ENCODE measurements at regions of chr20 and their contacts with region 1.

Region 1: GRCh38 chr20:2688041-2688591 is 4.5 kb upstream of the EBF4 start:
- DNase-seq: peak; percentile 78 to 84 (median 80)
- H3K4me3 ChIP-seq: no peak overlapping the region
- H3K4me3 Mint-ChIP-seq: peak overlapping the region in 6 of 8 donors; percentile 20 to 64 (median 43)
- H3K27ac ChIP-seq: no peak overlapping the region
- H3K27ac Mint-ChIP-seq: peak overlapping the region in 4 of 7 donors; percentile 65 to 77 (median 70)
- H3K4me1 ChIP-seq: peaks cover 16% of the 10 kb centered on the region
- H3K4me1 Mint-ChIP-seq: peaks cover 13 to 30% (median 27%) of the 10 kb centered on the region in 4 donors
- H3K27me3 ChIP-seq: no peaks in the 10 kb centered on the region
- H3K27me3 Mint-ChIP-seq: peaks cover 7 to 29% of the 10 kb centered on the region in 2 donors

Region 2: DNA sequence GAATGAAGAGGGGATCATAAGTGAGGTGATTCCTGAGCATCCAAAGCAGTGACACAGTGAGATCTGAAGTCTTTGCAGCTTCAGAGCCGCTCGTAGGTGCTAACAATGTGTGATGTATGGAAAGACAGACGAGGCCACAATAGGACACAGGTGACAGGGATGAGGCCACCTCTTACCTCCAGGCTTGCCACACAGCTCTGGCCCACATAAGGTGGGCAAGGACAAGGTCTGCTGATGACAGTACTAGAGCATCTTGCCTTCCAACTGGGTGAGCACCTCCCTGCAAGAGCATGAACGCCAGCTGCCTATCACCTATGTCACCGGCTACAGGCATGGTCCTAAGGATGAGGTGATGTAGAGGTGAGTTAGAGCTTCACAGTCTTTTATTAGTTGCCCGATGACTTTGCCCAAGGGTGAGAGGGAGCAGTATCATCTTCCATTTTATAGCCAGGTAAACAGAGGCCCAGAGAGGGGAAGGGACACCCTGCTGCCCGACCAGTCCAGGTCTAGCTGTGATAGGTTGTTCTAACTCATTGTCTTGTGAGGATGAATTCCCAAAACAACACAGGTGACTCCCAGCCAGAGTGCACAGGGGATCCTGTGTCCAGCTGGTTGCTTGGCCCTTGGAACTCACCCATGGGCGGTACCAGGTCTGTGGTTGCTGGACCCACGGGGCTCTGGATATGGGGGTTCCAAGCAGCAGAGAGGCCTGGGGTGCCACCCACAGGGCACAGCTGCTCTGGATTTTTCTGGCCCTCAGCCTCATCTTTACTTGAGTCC is 313.6 kb before region 1 on chr20:
- CTCF ChIA-PET with region 1: no interaction called
- POLR2A ChIA-PET with region 1: no interaction called
- intact Hi-C with region 1: no loop called
- DNase-seq: no peak
- H3K4me3 ChIP-seq: no peak overlapping the region
- H3K4me3 Mint-ChIP-seq: no peak overlapping the region
- H3K27ac ChIP-seq: no peak overlapping the region
- H3K27ac Mint-ChIP-seq: no peak overlapping the region
- H3K4me1 ChIP-seq: peaks cover 12% of the 10 kb centered on the region
- H3K4me1 Mint-ChIP-seq: peaks cover 11 to 19% (median 15%) of the 10 kb centered on the region in 4 donors
- H3K27me3 ChIP-seq: peaks cover 4% of the 10 kb centered on the region
- H3K27me3 Mint-ChIP-seq: peaks cover 15 to 26% of the 10 kb centered on the region in 2 donors

Region 3: DNA sequence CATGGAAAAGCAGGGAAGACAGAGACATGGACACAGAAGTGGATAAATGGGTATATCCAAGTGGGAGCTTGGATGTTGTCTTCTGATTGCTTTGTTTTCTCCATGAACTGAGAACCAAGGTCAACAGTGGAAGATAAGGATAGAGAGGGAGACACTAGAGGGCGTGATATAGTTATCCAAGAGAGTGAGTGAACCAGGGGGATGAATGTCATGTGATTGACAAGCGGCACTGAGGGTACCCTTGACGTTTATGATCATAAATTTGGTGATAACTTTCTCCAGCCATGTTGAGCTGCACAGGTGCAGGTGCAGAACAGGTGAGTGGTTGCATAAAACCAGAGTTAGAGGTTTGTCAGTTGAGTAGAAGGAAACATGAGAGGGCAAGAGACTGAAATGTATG is 25.2 kb after region 1 on chr20:
- CTCF ChIA-PET with region 1: interaction called, 21 read pairs
- POLR2A ChIA-PET with region 1: no interaction called
- intact Hi-C with region 1: loop called (anchors 1 kb)
- DNase-seq: peak in 4 of 5 donors; percentile 43 to 54 (median 49)
- H3K4me3 ChIP-seq: no peak overlapping the region
- H3K4me3 Mint-ChIP-seq: no peak overlapping the region
- H3K27ac ChIP-seq: no peak overlapping the region
- H3K27ac Mint-ChIP-seq: no peak overlapping the region
- H3K4me1 ChIP-seq: no peaks in the 10 kb centered on the region
- H3K4me1 Mint-ChIP-seq: no peaks in the 10 kb centered on the region
- H3K27me3 ChIP-seq: no peaks in the 10 kb centered on the region
- H3K27me3 Mint-ChIP-seq: no peaks in the 10 kb centered on the region

Region 4: DNA sequence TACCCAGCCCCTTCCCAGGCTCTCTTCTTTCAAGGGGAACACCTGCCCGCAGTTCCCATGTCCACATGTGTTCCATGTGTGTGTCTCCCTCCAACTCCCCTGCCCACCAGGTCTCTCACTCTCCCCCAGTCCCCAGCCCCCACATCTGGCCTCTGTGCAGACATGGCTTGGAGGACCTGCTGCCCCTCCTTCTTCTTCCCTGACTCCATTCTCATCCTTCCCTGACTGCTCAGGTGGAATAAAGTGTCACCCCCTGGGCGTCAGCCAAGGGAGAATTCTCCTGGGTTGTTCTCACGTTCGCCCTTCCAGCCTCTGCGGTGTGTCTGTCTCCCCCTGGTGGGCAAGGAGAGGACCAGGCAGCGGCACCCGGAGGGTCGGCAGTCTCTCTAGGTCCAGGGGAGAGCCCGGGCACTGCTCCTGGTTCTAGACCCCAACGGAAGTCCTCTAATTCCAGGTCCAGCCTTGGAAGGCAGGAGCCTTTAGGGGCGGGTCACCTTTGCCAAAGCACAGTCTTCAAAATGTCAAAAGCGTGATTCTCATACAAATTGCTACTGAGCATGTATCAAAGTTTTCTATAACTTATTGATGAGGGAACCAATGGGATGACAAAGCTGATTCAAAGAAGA is 54.9 kb after region 1 on chr20:
- CTCF ChIA-PET with region 1: interaction called, 99 read pairs
- POLR2A ChIA-PET with region 1: interaction called, 27 read pairs
- intact Hi-C with region 1: loop called (anchors 1 kb)
- DNase-seq: peak; percentile 68 to 80 (median 74)
- H3K4me3 ChIP-seq: no peak overlapping the region
- H3K4me3 Mint-ChIP-seq: peak overlapping the region; percentile 56 to 94 (median 72)
- H3K27ac ChIP-seq: peak overlapping the region; percentile 42
- H3K27ac Mint-ChIP-seq: peak overlapping the region; percentile 84 to 98 (median 93)
- H3K4me1 ChIP-seq: peaks cover 42% of the 10 kb centered on the region
- H3K4me1 Mint-ChIP-seq: peaks cover 37 to 56% (median 44%) of the 10 kb centered on the region in 4 donors
- H3K27me3 ChIP-seq: no peaks in the 10 kb centered on the region
- H3K27me3 Mint-ChIP-seq: no peaks in the 10 kb centered on the region

Region 5: DNA sequence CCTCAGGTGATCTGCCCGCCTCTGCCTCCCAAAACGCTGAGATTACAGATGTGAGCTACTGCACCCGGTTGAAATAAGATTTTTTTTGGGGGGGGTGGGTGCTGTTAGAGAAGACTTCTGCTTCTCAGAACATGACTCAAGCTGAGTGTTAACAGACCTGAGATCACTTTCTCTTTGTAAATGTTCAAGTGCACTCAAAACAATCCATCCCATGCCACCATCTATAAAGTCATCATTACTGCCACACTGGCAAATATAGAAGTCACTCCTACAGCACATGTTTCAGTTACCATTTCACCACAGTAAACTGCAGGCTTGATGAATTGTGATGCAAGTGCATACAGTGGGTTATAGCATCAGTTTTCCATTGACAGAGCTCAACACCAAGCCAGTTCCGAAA is 161.4 kb after region 1 on chr20:
- CTCF ChIA-PET with region 1: interaction called, 11 read pairs
- POLR2A ChIA-PET with region 1: no interaction called
- intact Hi-C with region 1: loop called (anchors 1 kb)
- DNase-seq: no peak
- H3K4me3 ChIP-seq: no peak overlapping the region
- H3K4me3 Mint-ChIP-seq: no peak overlapping the region
- H3K27ac ChIP-seq: no peak overlapping the region
- H3K27ac Mint-ChIP-seq: no peak overlapping the region
- H3K4me1 ChIP-seq: peaks cover 13% of the 10 kb centered on the region
- H3K4me1 Mint-ChIP-seq: peaks cover 19 to 43% (median 27%) of the 10 kb centered on the region in 4 donors
- H3K27me3 ChIP-seq: no peaks in the 10 kb centered on the region
- H3K27me3 Mint-ChIP-seq: no peaks in the 10 kb centered on the region

Region 6: GRCh38 chr20:3000852-3001523 is 312.9 kb after region 1 on chr20:
- CTCF ChIA-PET with region 1: no interaction called
- POLR2A ChIA-PET with region 1: no interaction called
- intact Hi-C with region 1: loop called (anchors 1 kb)
- DNase-seq: peak; percentile 15 to 60 (median 45)
- H3K4me3 ChIP-seq: no peak overlapping the region
- H3K4me3 Mint-ChIP-seq: no peak overlapping the region
- H3K27ac ChIP-seq: no peak overlapping the region
- H3K27ac Mint-ChIP-seq: peak overlapping the region in 1 of 7 donors; percentile 53
- H3K4me1 ChIP-seq: no peaks in the 10 kb centered on the region
- H3K4me1 Mint-ChIP-seq: peaks cover 0 to 4% (median 2%) of the 10 kb centered on the region in 4 donors
- H3K27me3 ChIP-seq: no peaks in the 10 kb centered on the region
- H3K27me3 Mint-ChIP-seq: no peaks in the 10 kb centered on the region